Panc1 (cell line): ENCODE measurements at regions of chr1 and their contacts with region 1.

Region 1: GRCh38 chr1:181485287-181486097 is 2.2 kb downstream of the CACNA1E start:
- DNase-seq: no peak
- ATAC-seq: no peak
- H3K4me3 ChIP-seq: no peak overlapping the region
- H3K27ac ChIP-seq: no peak overlapping the region
- H3K4me1 ChIP-seq: peaks cover 4% of the 10 kb centered on the region
- H3K27me3 ChIP-seq: peaks cover 42% of the 10 kb centered on the region
- CTCF ChIP-seq: no peak

Region 2: DNA sequence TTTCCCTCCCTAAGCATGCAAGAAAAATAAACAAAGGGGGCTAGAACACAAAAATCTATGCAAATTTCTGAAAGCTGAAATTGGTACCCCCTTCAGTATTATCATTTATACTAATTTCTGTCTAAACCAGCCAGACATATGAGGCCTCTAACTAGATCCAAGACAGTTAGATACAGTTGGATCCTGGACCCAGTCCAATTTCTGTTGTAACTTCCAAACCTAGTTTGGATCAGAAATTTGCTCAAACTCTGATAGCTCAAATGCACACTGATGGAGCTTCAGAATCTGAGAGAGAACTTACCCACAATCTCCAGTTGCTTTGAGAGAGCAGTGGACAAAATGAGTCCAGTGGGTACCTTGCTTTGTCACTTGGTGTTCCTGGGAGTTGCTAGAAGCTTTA is 1518.9 kb before region 1 on chr1:
- CTCF ChIA-PET with region 1: no interaction called
- POLR2A ChIA-PET with region 1: no interaction called
- in situ Hi-C with region 1: no loop called
- intact Hi-C with region 1: no loop called
- DNase-seq: no peak
- ATAC-seq: no peak
- H3K4me3 ChIP-seq: no peak overlapping the region
- H3K27ac ChIP-seq: no peak overlapping the region
- H3K4me1 ChIP-seq: 0 out of 2 replicates have a peak, but pooled peaks cover 2% of the 10 kb centered on the region
- H3K27me3 ChIP-seq: no peaks in the 10 kb centered on the region
- CTCF ChIP-seq: no peak

Region 3: GRCh38 chr1:181324797-181325616 is 160.5 kb before region 1 on chr1:
- CTCF ChIA-PET with region 1: no interaction called
- POLR2A ChIA-PET with region 1: no interaction called
- in situ Hi-C with region 1: no loop called
- intact Hi-C with region 1: no loop called
- DNase-seq: no peak
- ATAC-seq: peak; percentile 76
- H3K4me3 ChIP-seq: no peak overlapping the region
- H3K27ac ChIP-seq: no peak overlapping the region
- H3K4me1 ChIP-seq: no peaks in the 10 kb centered on the region
- H3K27me3 ChIP-seq: peaks cover 2% of the 10 kb centered on the region; the same call in 1 of the 2 replicates
- CTCF ChIP-seq: no peak

Region 4: DNA sequence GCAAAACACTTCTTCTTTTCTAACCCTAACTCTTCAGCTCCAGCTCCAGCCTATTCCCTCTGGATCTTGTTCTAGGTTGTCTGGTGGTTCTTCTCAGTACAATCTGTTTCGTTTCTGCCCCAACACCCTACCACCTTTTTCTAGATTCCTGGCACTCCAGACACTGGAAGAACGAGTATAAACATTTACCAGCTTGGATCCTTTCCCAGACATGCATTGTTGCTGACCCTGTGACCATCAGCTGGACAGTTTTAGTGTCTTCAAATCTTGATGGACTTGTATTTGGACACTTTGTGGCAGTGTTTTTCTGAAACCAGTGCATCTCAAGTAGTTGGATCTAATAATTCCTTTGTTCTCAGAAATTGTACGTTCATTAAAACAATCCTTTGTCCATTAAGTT is 32.7 kb before region 1 on chr1:
- CTCF ChIA-PET with region 1: no interaction called
- POLR2A ChIA-PET with region 1: no interaction called
- in situ Hi-C with region 1: no loop called
- intact Hi-C with region 1: no loop called
- DNase-seq: no peak
- ATAC-seq: no peak
- H3K4me3 ChIP-seq: no peak overlapping the region
- H3K27ac ChIP-seq: no peak overlapping the region
- H3K4me1 ChIP-seq: no peaks in the 10 kb centered on the region
- H3K27me3 ChIP-seq: no peaks in the 10 kb centered on the region; the same call in 1 of the 2 replicates
- CTCF ChIP-seq: no peak

Region 5: GRCh38 chr1:181647314-181648195 is 162.1 kb after region 1 on chr1:
- CTCF ChIA-PET with region 1: interaction called, 11 read pairs
- POLR2A ChIA-PET with region 1: no interaction called
- in situ Hi-C with region 1: no loop called
- intact Hi-C with region 1: no loop called
- DNase-seq: no peak
- ATAC-seq: no peak
- H3K4me3 ChIP-seq: no peak overlapping the region
- H3K27ac ChIP-seq: no peak overlapping the region
- H3K4me1 ChIP-seq: no peaks in the 10 kb centered on the region
- H3K27me3 ChIP-seq: no peaks in the 10 kb centered on the region; the same call in 1 of the 2 replicates
- CTCF ChIP-seq: no peak

Region 6: DNA sequence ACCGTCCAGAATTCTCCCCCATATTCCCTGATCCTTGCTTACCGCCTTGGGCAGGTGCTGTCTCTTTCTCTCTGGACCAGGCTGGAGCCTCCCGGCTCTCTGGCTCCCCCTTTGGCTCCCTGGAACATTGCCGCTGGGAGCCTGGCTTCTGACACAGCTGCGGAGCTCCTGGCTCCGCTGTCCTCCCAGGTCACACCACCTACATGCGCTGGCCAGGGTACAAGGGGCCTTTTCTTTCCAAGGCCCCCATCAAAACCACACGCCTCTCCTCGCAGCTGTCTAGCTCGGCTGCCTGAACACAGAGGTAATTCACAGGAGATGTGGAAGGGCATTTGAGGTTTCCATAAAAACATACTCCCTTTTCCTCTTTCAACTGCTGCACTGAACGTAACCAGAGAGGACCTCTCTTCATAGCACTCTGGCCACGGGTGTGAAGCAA is 583.6 kb after region 1 on chr1:
- CTCF ChIA-PET with region 1: no interaction called
- POLR2A ChIA-PET with region 1: no interaction called
- in situ Hi-C with region 1: no loop called
- intact Hi-C with region 1: loop called (anchors 5 kb)
- DNase-seq: no peak
- ATAC-seq: peak; percentile 99
- H3K4me3 ChIP-seq: no peak overlapping the region
- H3K27ac ChIP-seq: no peak overlapping the region
- H3K4me1 ChIP-seq: no peaks in the 10 kb centered on the region
- H3K27me3 ChIP-seq: no peaks in the 10 kb centered on the region
- CTCF ChIP-seq: peak; percentile 84